H1 (cell line): ENCODE measurements at regions of chr3 and their contacts with region 1.

Region 1: DNA sequence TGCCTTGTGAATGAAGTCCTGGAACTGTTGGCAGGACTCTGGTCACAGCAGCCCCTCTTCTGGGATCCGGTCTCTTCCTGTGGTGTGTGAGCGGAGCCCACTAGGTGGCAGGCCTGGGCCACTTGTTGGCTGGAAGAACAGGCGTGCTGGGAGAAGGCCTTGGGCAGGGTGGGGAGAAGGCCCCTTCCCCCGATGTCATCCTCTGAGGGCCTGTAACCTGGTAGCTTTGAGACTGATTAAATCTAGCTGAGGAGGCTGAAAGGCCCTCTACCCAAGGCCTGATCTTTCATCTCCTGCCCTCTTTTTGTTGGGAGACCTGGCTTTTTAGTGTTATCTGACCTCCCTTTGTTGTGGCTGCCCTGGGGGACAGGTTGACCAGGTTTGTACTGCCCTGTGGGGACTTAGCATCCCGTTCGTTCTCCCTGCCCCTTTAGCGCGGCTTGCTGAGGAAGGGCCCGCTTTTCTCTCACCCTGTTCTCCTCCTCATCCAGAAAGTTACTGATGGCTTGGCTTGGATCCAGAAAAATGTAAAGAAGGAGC is 48.3 kb downstream of the CHCHD6 start:
- DNase-seq: peak; percentile 78 to 90
- H3K4me3 ChIP-seq: no peak overlapping the region
- H3K27ac ChIP-seq: no peak overlapping the region
- H3K4me1 ChIP-seq: peaks cover 14 to 18% (median 15%) of the 10 kb centered on the region in 4 experiments
- H3K27me3 ChIP-seq: no peaks in the 10 kb centered on the region
- CTCF ChIP-seq: peak; percentile 88 to 96 (median 93)
- EP300 ChIP-seq: peak in 1 of 2 experiments; percentile 26; a peak in 1 of 3 replicates
- POLR2A ChIP-seq: no peak
- RAD21 ChIP-seq: peak; percentile 99

Region 2: GRCh38 chr3:126679318-126679751 is 73.0 kb before region 1 on chr3:
- CTCF ChIA-PET with region 1: interaction called, 19 read pairs
- POLR2A ChIA-PET with region 1: no interaction called
- DNase-seq: peak; percentile 79 to 99
- H3K4me3 ChIP-seq: peak overlapping the region in 1 of 4 experiments; percentile 45; a peak in 1 of 8 replicates
- H3K27ac ChIP-seq: no peak overlapping the region
- H3K4me1 ChIP-seq: peaks cover 0 to 8% (median 6%) of the 10 kb centered on the region in 4 experiments; a peak in 5 of 7 replicates
- H3K27me3 ChIP-seq: peaks cover 2 to 19% (median 14%) of the 10 kb centered on the region in 4 experiments; a peak in 6 of 7 replicates
- CTCF ChIP-seq: peak; percentile 93 to 94 (median 94)
- EP300 ChIP-seq: no peak
- POLR2A ChIP-seq: no peak
- RAD21 ChIP-seq: peak; percentile 91 to 96

Region 3: GRCh38 chr3:126765187-126766069 is 13.1 kb after region 1 on chr3:
- CTCF ChIA-PET with region 1: interaction called, 28 read pairs
- POLR2A ChIA-PET with region 1: interaction called, 3 read pairs
- DNase-seq: peak in 1 of 2 experiments; percentile 39
- H3K4me3 ChIP-seq: no peak overlapping the region
- H3K27ac ChIP-seq: no peak overlapping the region
- H3K4me1 ChIP-seq: peaks cover 0 to 3% (median 1%) of the 10 kb centered on the region in 4 experiments; a peak in 3 of 7 replicates
- H3K27me3 ChIP-seq: no peaks in the 10 kb centered on the region
- CTCF ChIP-seq: no peak
- EP300 ChIP-seq: no peak
- POLR2A ChIP-seq: no peak
- RAD21 ChIP-seq: no peak

Region 4: DNA sequence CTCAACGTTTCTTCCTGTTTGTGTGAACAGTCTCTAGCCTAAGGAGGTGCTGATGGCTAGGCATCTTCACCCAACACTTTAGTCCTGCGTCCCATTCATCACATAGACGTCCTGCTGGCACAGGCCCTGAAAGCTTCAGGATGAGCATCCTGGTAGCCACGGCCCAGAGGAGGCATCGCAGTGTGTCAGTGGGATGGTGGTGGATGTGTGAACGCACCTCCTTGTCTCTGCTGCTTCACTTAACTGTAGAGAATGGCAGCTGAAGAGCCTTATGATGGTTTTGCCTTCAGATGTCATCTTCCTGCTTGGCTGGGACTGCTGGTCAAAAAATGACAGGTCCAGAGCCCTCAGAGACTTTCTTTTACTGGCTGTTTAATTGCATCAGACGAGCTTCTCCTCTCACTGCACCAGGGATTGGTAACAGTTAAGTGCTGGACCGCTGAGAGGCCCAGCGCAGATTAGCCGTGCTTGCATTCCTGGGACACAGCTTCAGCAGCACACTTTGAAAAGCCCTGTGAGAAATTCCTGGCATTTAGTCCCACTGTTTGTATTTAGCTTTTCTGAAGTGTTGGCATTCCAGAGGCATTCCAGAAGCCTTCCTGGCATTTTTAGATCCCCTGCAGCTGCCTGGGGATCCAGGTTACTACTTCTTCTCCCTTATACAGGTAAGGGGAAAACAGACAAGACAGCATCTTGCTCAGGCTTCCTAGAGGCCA is 98.2 kb after region 1 on chr3:
- CTCF ChIA-PET with region 1: interaction called, 53 read pairs
- POLR2A ChIA-PET with region 1: interaction called, 14 read pairs
- DNase-seq: peak; percentile 68 to 85
- H3K4me3 ChIP-seq: no peak overlapping the region
- H3K27ac ChIP-seq: peak overlapping the region; percentile 85
- H3K4me1 ChIP-seq: peaks cover 26 to 33% (median 28%) of the 10 kb centered on the region in 4 experiments
- H3K27me3 ChIP-seq: no peaks in the 10 kb centered on the region
- CTCF ChIP-seq: no peak
- EP300 ChIP-seq: peak in 1 of 2 experiments; percentile 96; a peak in 2 of 3 replicates
- POLR2A ChIP-seq: no peak
- RAD21 ChIP-seq: peak in 1 of 2 experiments; percentile 26; a peak in 3 of 4 replicates

Region 5: GRCh38 chr3:126947429-126948225 is 195.3 kb after region 1 on chr3:
- CTCF ChIA-PET with region 1: interaction called, 23 read pairs
- POLR2A ChIA-PET with region 1: no interaction called
- DNase-seq: no peak
- H3K4me3 ChIP-seq: no peak overlapping the region
- H3K27ac ChIP-seq: no peak overlapping the region
- H3K4me1 ChIP-seq: no peaks in the 10 kb centered on the region
- H3K27me3 ChIP-seq: no peaks in the 10 kb centered on the region
- CTCF ChIP-seq: no peak
- EP300 ChIP-seq: no peak
- POLR2A ChIP-seq: no peak
- RAD21 ChIP-seq: no peak

Region 6: DNA sequence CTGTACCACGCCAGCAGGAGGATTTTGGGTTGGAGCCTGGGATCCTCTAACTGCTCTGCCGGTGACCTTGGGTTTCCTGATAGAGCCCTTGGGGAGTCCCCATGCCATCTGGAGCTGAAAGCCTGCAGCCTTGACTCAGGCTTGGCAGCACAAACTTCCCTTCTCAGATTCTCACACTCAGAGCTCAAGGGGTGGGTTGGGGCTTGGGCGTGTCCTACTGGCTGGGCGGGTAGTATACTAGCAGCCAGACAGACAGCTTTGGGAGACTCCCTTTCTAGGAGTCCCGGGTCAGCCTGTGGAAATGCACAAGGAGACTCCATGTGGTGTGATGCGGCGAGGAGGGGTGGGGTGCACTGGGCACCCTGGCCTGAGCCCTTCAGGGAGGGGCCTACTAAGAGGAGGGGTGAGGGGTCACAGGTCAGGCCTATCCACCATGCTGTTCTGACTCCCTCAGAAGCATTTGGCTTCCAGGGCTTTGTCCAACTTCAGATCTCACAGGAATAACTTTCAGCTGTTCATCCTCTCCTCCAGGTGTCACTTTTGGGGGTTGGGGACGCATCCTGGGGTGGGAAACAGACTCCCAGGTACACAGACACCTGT is 208.9 kb after region 1 on chr3:
- CTCF ChIA-PET with region 1: interaction called, 11 read pairs
- POLR2A ChIA-PET with region 1: interaction called, 3 read pairs
- DNase-seq: no peak
- H3K4me3 ChIP-seq: no peak overlapping the region
- H3K27ac ChIP-seq: no peak overlapping the region
- H3K4me1 ChIP-seq: peaks cover 0 to 10% (median 7%) of the 10 kb centered on the region in 4 experiments; a peak in 3 of 7 replicates
- H3K27me3 ChIP-seq: no peaks in the 10 kb centered on the region; a peak in 1 of 7 replicates
- CTCF ChIP-seq: no peak
- EP300 ChIP-seq: no peak
- POLR2A ChIP-seq: no peak
- RAD21 ChIP-seq: no peak

Region 7: DNA sequence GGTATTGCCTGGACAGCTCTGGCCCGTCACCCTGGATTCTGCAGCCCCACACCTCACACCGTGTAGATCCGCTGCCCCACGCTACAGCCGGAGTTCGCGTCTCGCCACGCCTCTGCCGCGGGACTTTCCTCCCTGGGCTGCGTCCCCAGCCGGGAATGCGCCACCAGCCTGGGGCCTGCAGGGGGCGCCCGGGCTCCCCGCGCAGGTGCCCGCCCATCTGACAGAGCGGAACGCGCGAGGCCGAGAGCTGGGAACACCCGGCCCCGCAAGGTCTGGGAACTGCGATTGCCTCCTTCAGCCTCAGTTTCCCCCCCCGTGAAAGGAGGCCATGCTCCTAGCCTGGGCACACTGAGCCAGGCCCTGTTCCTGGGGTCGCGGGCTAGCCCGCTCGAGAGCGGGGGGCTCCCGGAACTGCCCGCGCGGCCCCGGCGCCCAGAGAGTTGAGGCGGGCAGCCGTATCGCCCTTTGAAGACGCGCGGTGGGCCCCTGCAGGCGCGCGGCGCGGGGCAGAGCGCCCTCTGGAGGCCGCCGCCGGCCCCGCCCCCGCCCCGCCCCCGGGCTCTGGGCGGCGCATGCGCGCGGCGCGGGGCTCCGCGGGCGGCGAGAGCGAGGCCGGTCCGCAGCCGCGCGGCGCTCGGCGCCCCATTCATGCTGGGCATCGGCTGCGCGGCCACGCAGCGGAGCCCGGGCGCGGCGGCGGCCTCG is 230.2 kb after region 1 on chr3 and contains the start of gene PLXNA1:
- CTCF ChIA-PET with region 1: interaction called, 74 read pairs
- POLR2A ChIA-PET with region 1: interaction called, 6 read pairs
- DNase-seq: peak; percentile 15 to 94
- H3K4me3 ChIP-seq: peak within 1 kb of the TSS; percentile 67 to 87 (median 73)
- H3K27ac ChIP-seq: no peak within 1 kb of the TSS
- H3K4me1 ChIP-seq: peaks cover 0 to 26% (median 12%) of the 10 kb centered on the region in 4 experiments; a peak in 6 of 7 replicates
- H3K27me3 ChIP-seq: peaks cover 0 to 8% (median 3%) of the 10 kb centered on the region in 4 experiments; a peak in 5 of 7 replicates
- CTCF ChIP-seq: peak in 2 of 3 experiments; percentile 82 to 88; a peak in 3 of 4 replicates
- EP300 ChIP-seq: no peak
- POLR2A ChIP-seq: no peak
- RAD21 ChIP-seq: peak; percentile 26 to 50; a peak in 3 of 4 replicates
- total RNA-seq, gene PLXNA1: 47.5 and 50.8 TPM in 2 replicates